ENCODE measurements at regions of chr17 and their contacts with region 1.

Region 1: GRCh38 chr17:17859909-17860765 is 23.4 kb upstream of the SREBF1 start:
- DNase-seq: peak; percentile 78
- H3K4me3 Mint-ChIP-seq: no peak overlapping the region
- H3K27ac Mint-ChIP-seq: no peak overlapping the region
- H3K4me1 Mint-ChIP-seq: peaks cover 49% of the 10 kb centered on the region
- H3K27me3 Mint-ChIP-seq: no peaks in the 10 kb centered on the region

Region 2: DNA sequence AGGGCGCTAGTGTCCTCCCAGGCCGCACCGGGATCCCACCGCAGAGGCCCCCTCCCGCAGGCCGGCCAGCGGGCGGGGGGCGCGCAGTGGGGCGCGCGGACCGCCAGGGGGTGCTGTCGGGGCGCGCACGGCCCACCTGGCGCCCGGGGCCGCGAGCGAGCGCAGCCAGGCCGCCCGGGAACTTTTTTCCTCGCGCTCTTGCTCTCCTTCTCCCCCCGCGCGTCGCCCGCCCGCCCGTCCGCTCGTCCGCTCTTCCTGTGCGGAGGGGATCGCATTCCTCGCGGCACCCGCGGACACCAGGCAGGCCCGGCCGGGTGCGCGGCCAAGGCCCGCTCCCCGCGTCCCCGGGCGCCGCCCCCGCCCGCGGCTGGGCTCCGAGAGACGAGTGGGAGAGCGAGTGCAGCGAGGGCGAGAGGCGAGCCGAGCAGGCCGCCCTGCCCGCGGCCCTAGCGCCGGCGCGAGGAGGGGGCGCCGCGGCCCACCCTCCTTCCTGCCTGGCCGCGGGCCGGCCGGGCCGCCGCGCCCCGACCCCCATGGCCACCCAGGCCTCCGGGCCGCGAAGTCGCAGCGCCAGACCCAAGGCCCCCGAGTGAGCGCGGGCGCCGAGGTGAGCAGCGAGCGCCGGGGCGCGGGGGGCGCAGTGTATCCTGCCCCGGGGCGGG is 178.8 kb before region 1 on chr17 and contains the start of gene RAI1:
- CTCF ChIA-PET with region 1: interaction called, 10 read pairs
- POLR2A ChIA-PET with region 1: no interaction called
- DNase-seq: peak; percentile 66
- H3K4me3 Mint-ChIP-seq: peak within 1 kb of the TSS; percentile 85
- H3K27ac Mint-ChIP-seq: peak within 1 kb of the TSS; percentile 85
- H3K4me1 Mint-ChIP-seq: peaks cover 37% of the 10 kb centered on the region
- H3K27me3 Mint-ChIP-seq: peaks cover 9% of the 10 kb centered on the region
- total RNA-seq, gene RAI1: 18.1 to 18.5 TPM

Region 3: GRCh38 chr17:17836250-17836817 is 23.8 kb before region 1 on chr17:
- CTCF ChIA-PET with region 1: interaction called, 11 read pairs
- POLR2A ChIA-PET with region 1: interaction called, 3 read pairs
- DNase-seq: peak; percentile 96
- H3K4me3 Mint-ChIP-seq: peak overlapping the region; percentile 87
- H3K27ac Mint-ChIP-seq: peak overlapping the region; percentile 89
- H3K4me1 Mint-ChIP-seq: peaks cover 77% of the 10 kb centered on the region
- H3K27me3 Mint-ChIP-seq: no peaks in the 10 kb centered on the region

Region 4: DNA sequence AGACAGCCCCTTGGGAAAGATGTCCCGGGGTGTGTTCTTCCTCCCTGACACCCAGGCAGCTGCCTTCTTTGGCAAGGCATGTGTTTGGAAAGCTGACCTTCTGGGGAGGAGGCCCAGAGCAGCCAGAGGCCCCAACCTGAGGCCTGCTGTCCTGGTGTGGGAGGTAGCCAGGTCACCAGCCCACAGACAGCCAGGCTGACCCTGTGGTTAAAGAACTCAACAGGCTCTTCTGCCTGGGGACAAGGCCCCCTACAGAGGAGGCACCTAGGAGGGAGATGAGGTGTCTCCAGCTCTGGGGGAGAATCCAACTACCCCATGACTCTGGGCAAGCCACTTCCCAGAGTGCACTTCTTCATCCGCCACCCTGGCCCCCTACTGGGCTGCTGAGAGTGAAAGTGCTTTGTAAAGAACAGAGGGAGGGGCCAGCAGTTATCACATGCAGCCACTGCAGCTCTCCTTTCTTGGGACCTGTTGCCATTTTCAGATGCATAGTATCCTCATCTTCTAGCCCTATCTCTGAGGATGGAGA is 10.2 kb before region 1 on chr17:
- CTCF ChIA-PET with region 1: interaction called, 13 read pairs
- POLR2A ChIA-PET with region 1: no interaction called
- DNase-seq: peak; percentile 81
- H3K4me3 Mint-ChIP-seq: peak overlapping the region; percentile 22
- H3K27ac Mint-ChIP-seq: peak overlapping the region; percentile 96
- H3K4me1 Mint-ChIP-seq: peaks cover 81% of the 10 kb centered on the region
- H3K27me3 Mint-ChIP-seq: no peaks in the 10 kb centered on the region

Region 5: GRCh38 chr17:18033442-18034099 is 173.4 kb after region 1 on chr17:
- CTCF ChIA-PET with region 1: interaction called, 10 read pairs
- POLR2A ChIA-PET with region 1: no interaction called
- DNase-seq: peak; percentile 80
- H3K4me3 Mint-ChIP-seq: no peak overlapping the region
- H3K27ac Mint-ChIP-seq: no peak overlapping the region
- H3K4me1 Mint-ChIP-seq: peaks cover 37% of the 10 kb centered on the region
- H3K27me3 Mint-ChIP-seq: no peaks in the 10 kb centered on the region

Region 6: DNA sequence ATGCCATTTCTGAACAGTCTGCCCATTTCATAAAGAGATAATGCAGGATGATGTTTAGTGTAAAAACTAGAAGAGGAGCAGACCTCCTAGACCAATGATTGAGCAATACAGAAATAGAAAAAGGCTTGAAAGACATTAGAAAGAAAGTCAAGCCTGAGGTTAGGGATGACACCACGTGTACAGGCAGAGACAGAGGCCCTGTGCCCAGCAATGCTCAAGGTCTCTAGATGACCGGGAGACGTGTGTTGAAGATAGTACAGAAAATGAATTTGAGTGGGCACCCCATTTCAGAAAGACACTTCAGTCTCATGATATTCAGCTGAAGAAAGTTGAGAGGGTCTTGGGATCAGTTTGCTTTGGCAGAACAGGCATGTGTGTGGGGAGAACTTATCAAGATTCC is 184.5 kb after region 1 on chr17:
- CTCF ChIA-PET with region 1: no interaction called
- POLR2A ChIA-PET with region 1: no interaction called
- DNase-seq: no peak
- H3K4me3 Mint-ChIP-seq: no peak overlapping the region
- H3K27ac Mint-ChIP-seq: no peak overlapping the region
- H3K4me1 Mint-ChIP-seq: peaks cover 26% of the 10 kb centered on the region
- H3K27me3 Mint-ChIP-seq: no peaks in the 10 kb centered on the region